Posterior vena cava (tissue), 2 donors: ENCODE measurements at regions of chr1 and their contacts with region 1.

Region 1: GRCh38 chr1:172154551-172154950 is 265.9 kb upstream of the C1orf105 start:
- DNase-seq: no peak

Region 2: DNA sequence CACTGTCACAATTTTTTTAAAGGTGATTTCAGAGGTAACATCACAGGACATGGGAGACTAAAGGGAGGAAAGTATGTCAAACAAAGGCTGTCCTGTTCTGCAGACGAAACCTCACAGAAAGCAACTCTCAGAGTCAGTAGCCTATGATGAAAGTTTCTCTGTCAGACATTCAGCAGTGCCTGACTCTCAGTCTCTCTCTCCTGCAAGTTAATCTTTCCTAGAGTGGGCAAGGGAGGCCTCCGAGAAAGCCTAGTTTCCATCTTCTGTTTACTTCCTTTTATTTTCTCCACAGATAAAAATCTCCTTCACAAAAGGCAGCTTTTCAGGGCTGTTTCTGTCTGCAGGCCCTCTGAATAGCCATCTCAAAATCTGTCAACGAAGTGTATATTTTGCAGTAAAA is 994.3 kb before region 1 on chr1:
- intact Hi-C with region 1: no loop called
- DNase-seq: no peak

Region 3: DNA sequence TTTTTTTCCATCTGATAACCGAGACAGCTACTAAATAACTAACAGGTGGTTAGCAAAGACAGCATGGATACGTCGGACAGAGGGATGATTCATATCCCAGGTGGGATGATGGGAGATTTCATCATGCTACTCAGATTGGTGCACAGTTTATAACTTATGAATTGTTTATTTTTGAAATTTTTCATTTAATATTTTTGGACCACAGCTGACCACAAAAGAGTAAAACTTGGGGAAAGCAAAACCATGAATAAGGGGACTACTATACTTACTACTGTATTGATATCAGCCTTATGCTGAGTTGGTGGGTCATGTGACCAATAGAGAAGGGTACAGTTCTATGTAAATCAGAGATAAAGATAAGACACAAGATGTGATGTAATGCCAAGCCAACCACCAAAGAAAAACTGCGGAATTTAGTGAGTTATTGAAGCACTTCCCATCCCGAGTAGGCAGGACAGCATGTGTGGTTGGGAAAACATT is 17.8 kb after region 1 on chr1:
- intact Hi-C with region 1: loop called in 1 of 2 experiments (anchors 1 kb)
- DNase-seq: no peak

Region 4: DNA sequence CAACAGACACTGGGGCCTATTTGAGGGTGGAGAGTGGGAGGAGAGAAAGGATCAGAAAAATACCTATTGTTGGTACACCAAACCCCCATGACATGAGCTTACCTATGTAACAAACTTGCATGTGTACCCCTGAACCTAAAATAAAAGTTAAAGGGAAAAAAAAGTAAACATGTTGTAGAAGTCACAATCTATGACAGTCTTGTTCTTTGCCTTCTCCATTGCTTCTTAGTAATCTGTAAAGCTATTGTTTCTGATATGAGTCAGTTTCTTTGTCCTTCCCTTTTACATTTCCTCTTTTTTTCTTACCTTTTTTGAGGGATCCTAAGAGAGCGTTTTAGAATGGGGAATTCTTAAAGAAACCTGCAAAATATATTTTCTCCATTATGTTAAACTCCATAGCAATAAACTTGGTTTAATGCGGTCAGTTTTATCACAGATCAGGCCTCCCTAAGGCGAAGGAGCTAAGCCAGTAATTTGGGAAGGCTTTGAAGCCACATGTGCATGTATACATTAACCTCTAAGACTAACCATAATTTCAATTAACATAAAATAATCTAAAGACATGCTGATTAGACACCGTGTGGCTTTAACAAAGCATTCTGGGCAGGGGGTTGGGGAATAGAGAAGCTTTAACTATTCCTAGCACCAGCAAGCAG is 188.2 kb after region 1 on chr1:
- intact Hi-C with region 1: no loop called
- DNase-seq: no peak